ENCODE measurements at regions of chr10 and their contacts with region 1.

Region 1: DNA sequence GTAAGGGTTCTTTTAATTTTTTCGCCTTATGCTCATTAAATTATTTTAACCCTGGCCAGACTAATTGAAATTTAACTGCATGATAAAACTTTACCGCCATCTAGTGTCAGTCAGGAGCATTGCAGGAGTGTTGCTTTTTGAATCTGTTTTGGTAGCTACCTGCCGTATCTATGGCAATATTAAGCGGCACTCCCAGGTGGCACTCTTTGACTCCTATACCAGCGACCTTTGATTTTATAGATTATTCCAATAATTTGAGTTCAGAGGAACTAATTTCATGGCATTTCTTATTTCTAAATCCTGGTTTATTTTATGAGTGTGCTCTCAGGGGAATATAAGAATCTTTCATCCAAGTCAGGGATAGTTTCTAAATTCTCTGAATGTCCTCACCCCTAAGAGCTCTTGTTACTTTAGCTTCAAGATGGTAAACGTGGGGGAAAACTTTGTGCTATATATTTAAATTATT is 198.9 kb downstream of the REEP3 start:
- DNase-seq: no peak
- ATAC-seq: peak; percentile 44

Region 2: GRCh38 chr10:63206997-63207811 is 512.9 kb before region 1 on chr10:
- intact Hi-C with region 1: loop called (anchors 5 kb)
- DNase-seq: no peak
- ATAC-seq: peak; percentile 83

Region 3: DNA sequence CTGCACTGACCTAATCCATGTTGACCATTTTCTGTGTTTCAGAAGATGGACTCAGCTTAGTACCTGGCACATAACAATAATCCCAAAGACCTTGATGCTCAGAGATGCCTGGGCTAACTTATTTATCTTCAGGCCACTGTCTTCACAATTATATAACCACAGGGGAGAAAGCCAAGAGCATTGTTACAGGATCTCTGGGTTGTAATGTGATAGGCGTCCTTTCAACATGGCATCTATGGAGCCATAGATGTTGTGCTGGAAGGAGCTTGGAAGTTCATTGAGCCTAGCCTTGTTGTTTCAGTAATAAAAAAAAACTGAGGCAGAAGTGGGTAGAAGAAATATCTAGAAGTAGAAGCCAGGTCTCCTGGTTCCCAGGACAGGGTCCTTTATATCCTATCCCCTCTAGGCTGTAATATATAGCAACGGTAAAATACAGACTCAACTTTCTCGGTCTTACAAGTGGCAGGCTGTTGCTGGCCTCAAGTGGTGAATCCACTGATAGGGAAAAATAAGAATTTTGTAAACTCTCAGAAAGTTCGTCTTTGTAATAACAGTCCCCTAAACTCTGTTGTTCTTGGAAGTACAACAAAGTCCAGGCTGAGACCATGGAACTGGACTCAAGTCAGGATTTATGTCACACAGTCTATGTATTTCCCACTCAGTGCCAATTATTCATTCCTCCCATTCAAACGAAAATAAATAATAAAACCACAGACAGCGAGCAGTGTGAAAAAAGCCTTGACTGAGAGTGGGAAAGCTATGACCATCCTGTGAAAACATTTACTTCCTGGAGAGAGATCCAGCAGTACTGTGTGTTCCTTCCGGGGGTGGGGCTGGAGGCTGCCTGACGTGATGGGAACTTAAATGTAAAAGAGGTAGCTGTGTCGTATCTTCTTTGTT is 78.7 kb after region 1 on chr10:
- intact Hi-C with region 1: no loop called
- DNase-seq: peak; percentile 86
- ATAC-seq: peak; percentile 88

Measured in Right ventricle myocardium inferior (tissue), 1 donor.